Motor neuron (in vitro differentiated cells): ENCODE measurements at regions of chr12 and their contacts with region 1.

Region 1: GRCh38 chr12:66708704-66709456 is 30.0 kb upstream of the GRIP1 start:
- ATAC-seq: no peak
- H3K4me3 ChIP-seq: no peak overlapping the region
- H3K27ac ChIP-seq: no peak overlapping the region
- H3K4me1 ChIP-seq: peaks cover 0 to 28% of the 10 kb centered on the region in 2 donors

Region 2: DNA sequence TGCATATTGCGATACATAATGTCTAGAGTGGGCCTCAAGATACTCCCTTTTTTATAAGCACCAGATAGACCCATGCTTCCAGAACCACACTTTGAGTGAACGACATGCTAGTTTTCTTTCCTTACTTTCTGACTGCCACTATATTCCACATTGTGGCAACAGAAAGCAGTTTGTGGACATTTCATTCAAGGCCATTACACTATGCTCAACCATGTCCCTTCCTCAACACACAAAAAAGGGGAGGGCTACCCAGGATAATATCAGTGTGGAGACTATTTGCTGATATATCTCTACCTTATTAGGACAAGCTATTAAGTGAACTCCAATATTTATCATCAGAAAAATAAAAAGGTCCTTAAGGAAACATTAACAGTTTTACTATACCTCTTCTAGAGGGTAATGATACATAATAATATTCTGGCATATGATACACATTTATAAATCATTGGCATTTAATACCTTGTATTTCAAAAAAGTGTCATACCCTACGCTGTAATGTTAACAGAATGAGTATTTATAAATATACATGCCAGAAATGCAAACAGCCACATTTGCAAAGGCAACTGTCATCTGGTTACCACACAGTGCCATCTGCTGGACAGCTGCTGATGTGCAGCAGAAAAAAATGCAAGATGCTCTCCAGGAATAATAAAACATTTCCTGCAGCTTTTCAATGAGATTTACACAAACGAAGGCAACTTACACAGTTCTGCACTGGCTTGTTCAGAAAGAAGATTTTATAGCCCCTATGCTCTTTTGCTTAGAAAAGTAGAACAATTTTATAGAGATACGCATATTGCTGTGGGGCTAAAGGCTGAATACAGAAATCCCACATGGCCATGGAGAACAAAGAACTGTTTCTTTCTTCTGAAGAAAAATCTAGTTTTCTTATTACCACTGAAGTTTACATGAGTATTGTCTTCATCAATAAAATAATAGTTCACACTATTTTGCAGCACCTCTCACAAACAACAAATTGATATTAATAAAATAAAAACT is 152.2 kb after region 1 on chr12:
- in situ Hi-C with region 1: loop called in 1 of 9 experiments (anchors 25 kb)
- ATAC-seq: peak; percentile 56 to 81 (median 64)
- H3K4me3 ChIP-seq: no peak overlapping the region
- H3K27ac ChIP-seq: no peak overlapping the region
- H3K4me1 ChIP-seq: peaks cover 0 to 26% of the 10 kb centered on the region in 2 donors